Tibial artery (tissue), 4 donors: ENCODE measurements at regions of chr9 and their contacts with region 1.

Region 1: GRCh38 chr9:108219664-108220063 is 636.1 kb downstream of the ACTL7B start:
- DNase-seq: no peak
- H3K4me3 ChIP-seq: no peak overlapping the region
- H3K27ac ChIP-seq: no peak overlapping the region
- H3K4me1 ChIP-seq: no peaks in the 10 kb centered on the region
- H3K27me3 ChIP-seq: no peaks in the 10 kb centered on the region
- CTCF ChIP-seq: no peak

Region 2: DNA sequence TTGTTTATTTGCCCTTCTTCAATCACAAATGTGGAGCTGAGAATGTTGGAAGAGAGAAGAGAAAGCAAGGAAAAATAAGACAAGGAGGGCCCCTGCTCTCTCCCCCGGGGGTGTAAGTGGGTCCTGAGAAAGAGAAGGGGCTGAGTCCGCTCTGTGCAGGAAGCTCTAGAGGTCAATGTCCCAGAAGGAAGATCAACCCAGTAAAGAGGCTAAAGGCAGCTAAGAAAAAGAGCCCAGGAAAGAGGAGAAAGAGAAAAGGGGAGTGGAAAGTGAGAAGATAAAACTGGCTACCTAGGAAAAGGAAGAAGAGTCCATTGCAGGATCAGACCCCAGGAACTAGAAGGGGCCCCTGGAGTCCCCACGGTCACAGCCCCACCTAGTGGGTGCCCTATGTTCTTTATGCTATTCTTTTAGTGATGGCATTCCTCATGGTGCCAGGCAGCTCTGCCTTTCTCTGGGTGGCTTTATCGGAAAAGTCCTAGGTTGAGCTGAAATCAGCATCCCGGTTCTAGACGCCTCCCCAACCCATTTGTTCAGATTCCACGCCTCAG is 52.8 kb after region 1 on chr9:
- intact Hi-C with region 1: loop called (anchors 2 kb)
- DNase-seq: peak in 1 of 2 donors; percentile 51
- H3K4me3 ChIP-seq: no peak overlapping the region
- H3K27ac ChIP-seq: no peak overlapping the region
- H3K4me1 ChIP-seq: peaks cover 0 to 4% (median 0%) of the 10 kb centered on the region in 4 donors
- H3K27me3 ChIP-seq: no peaks in the 10 kb centered on the region
- CTCF ChIP-seq: peak; percentile 13 to 35

Region 3: GRCh38 chr9:108823829-108824228 is 604.2 kb after region 1 on chr9:
- intact Hi-C with region 1: no loop called
- DNase-seq: no peak
- H3K4me3 ChIP-seq: no peak overlapping the region
- H3K27ac ChIP-seq: no peak overlapping the region
- H3K4me1 ChIP-seq: no peaks in the 10 kb centered on the region
- H3K27me3 ChIP-seq: no peaks in the 10 kb centered on the region
- CTCF ChIP-seq: no peak